Ascending aorta (tissue), 2 donors: ENCODE measurements at regions of chr1 and their contacts with region 1.

Region 1: DNA sequence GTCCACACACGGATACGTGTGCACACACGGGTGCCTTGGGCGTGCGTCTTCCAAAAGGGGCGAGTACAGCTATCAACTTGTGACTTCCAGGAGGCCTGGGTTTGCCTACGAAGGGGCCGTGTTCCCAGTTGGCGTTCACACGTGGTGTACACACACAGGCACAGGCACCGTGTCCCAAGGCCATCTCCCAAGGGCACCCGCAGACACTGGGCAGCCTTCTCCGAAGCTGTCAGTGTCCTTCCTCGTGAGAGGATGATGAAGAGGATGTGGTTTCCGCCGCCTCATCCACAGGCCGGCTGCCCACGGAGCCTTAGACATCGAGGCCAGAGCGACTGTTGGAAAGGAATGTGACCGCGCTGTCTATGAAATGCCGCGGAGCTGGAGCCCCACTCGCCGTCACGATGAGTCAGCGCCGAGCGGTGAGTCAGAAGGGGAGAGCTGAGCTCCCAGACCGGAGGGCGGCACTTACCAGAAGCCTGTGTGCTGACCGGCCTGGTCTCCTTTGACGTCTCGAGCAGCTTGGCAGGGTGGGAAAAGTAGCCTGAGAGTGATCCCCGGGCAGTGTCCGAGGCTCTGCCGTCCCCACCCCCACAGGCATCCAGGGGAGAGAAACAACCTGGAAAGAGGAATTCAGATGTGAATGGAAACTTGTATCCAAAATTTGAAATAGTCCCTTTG is 141.4 kb upstream of the ARHGEF16 start:
- DNase-seq: peak; percentile 93 to 99
- H3K4me3 ChIP-seq: peak overlapping the region; percentile 11 to 57
- H3K27ac ChIP-seq: peak overlapping the region; percentile 98 to 99
- H3K4me1 ChIP-seq: peaks cover 23 to 65% of the 10 kb centered on the region in 2 donors
- H3K27me3 ChIP-seq: no peaks in the 10 kb centered on the region
- CTCF ChIP-seq: no peak

Region 2: GRCh38 chr1:2229037-2229864 is 1083.8 kb before region 1 on chr1:
- intact Hi-C with region 1: no loop called
- DNase-seq: peak in 1 of 2 donors; percentile 82
- H3K4me3 ChIP-seq: peak overlapping the region; percentile 78 to 85
- H3K27ac ChIP-seq: peak overlapping the region; percentile 85 to 93
- H3K4me1 ChIP-seq: peaks cover 15 to 26% of the 10 kb centered on the region in 2 donors
- H3K27me3 ChIP-seq: no peaks in the 10 kb centered on the region
- CTCF ChIP-seq: peak in 1 of 3 experiments; percentile 13

Region 3: DNA sequence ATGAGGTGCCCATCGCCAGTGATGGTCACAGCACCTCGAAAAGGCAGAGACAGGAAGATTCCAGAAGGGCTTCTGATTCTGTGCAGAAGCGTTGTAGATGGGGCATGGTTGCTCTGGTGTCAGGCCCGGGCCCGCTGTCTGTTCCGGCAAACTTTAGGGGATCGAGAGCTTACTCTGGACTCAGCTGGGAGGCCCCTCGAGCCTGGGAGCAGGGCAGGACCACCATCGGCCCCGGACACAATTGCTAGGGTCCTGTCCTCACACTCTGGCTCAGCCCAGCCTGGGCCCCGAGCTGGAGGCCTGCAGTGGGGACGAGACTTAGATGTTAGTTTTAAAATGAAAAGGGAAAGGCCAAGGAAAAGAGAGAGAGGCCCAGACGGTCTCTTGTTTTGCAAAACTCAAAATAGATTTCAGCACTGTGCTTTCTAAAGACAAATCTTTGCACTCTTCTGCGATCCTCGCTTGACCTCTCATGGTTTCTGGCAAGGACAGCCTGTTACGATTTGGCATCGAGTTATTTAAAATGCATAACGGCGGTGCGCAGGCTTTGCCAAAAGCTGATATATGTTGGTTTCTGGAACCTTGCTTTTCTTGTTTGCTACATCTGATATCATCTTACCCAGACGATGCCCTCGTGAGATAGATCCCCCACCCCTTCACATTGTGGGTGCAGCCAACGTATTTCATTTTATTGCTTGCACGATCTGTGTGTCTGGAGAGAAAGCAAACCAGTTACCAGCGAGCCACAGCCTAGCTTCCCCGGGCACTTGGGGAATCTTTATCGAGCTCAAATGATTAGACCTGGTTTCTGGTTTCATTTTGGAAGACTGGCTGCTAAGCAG is 186.1 kb before region 1 on chr1:
- intact Hi-C with region 1: loop called (anchors 2 kb)
- DNase-seq: no peak
- H3K4me3 ChIP-seq: peak overlapping the region; percentile 30 to 32
- H3K27ac ChIP-seq: peak overlapping the region; percentile 86 to 91
- H3K4me1 ChIP-seq: peaks cover 49 to 96% of the 10 kb centered on the region in 2 donors
- H3K27me3 ChIP-seq: no peaks in the 10 kb centered on the region
- CTCF ChIP-seq: no peak

Region 4: GRCh38 chr1:3186513-3186921 is 126.5 kb before region 1 on chr1:
- intact Hi-C with region 1: loop called (anchors 1 kb)
- DNase-seq: peak; percentile 93 to 98
- H3K4me3 ChIP-seq: peak overlapping the region in 1 of 2 donors; percentile 41
- H3K27ac ChIP-seq: peak overlapping the region; percentile 99
- H3K4me1 ChIP-seq: peaks cover 24 to 72% of the 10 kb centered on the region in 2 donors
- H3K27me3 ChIP-seq: no peaks in the 10 kb centered on the region
- CTCF ChIP-seq: no peak

Region 5: GRCh38 chr1:3192825-3193224 is 120.2 kb before region 1 on chr1:
- intact Hi-C with region 1: loop called (anchors 1 kb)
- DNase-seq: peak; percentile 55 to 92
- H3K4me3 ChIP-seq: no peak overlapping the region
- H3K27ac ChIP-seq: peak overlapping the region; percentile 99
- H3K4me1 ChIP-seq: peaks cover 44 to 91% of the 10 kb centered on the region in 2 donors
- H3K27me3 ChIP-seq: no peaks in the 10 kb centered on the region
- CTCF ChIP-seq: no peak

Region 6: DNA sequence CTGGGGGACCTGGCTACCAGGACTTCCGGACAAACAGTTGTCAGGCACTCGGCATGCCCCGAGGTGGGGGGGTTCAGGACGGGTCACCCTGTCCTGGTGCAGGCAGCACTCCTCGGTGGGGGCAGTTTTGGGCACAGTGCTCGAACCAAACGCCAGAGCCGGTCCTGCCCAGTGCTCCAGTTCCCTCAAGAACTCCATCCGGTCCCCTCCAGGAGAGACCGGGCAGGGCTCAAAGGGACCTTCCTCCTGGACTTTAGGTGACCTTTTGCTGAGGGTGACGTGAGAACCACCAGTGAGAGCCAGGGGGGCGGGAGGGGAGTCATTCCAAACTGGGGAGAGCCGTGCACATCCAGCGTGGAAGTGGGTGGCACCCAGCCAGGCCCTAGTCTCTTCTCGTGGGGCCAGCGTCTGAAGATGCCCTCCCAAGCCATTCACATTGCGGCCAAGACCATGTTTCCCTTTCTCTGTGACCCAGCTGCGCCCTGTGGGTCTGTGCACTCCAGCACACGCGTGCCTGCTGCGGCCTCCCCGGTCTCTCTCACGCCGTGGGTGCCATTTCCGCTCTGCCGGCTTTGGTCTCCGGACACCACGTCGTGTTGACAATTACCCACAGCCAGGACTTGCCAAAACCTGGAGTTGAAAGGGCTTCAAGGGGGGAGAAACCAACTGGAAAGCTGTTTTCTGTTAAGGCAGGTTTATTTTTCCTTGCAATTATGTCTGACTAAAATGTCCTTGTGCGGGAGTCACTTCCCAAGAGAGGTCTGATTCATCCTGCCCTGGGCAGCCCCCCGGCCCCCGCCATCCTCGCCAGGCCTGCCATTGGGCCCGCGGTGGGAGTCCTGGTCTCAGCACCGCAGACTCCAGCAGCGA is 37.3 kb before region 1 on chr1:
- intact Hi-C with region 1: loop called (anchors 2 kb)
- DNase-seq: peak; percentile 39 to 86
- H3K4me3 ChIP-seq: peak overlapping the region in 1 of 2 donors; percentile 44
- H3K27ac ChIP-seq: peak overlapping the region; percentile 91 to 93
- H3K4me1 ChIP-seq: peaks cover 12 to 36% of the 10 kb centered on the region in 2 donors
- H3K27me3 ChIP-seq: no peaks in the 10 kb centered on the region
- CTCF ChIP-seq: no peak

Region 7: GRCh38 chr1:3336641-3337637 is 23.9 kb after region 1 on chr1:
- intact Hi-C with region 1: no loop called
- DNase-seq: no peak
- H3K4me3 ChIP-seq: no peak overlapping the region
- H3K27ac ChIP-seq: no peak overlapping the region
- H3K4me1 ChIP-seq: peaks cover 17 to 56% of the 10 kb centered on the region in 2 donors
- H3K27me3 ChIP-seq: no peaks in the 10 kb centered on the region
- CTCF ChIP-seq: no peak

Region 8: GRCh38 chr1:3369446-3370076 is 56.5 kb after region 1 on chr1:
- intact Hi-C with region 1: loop called (anchors 1 kb)
- DNase-seq: peak; percentile 79 to 96
- H3K4me3 ChIP-seq: peak overlapping the region in 1 of 2 donors; percentile 21
- H3K27ac ChIP-seq: peak overlapping the region; percentile 95 to 97
- H3K4me1 ChIP-seq: peaks cover 47 to 86% of the 10 kb centered on the region in 2 donors
- H3K27me3 ChIP-seq: no peaks in the 10 kb centered on the region
- CTCF ChIP-seq: no peak

Region 9: DNA sequence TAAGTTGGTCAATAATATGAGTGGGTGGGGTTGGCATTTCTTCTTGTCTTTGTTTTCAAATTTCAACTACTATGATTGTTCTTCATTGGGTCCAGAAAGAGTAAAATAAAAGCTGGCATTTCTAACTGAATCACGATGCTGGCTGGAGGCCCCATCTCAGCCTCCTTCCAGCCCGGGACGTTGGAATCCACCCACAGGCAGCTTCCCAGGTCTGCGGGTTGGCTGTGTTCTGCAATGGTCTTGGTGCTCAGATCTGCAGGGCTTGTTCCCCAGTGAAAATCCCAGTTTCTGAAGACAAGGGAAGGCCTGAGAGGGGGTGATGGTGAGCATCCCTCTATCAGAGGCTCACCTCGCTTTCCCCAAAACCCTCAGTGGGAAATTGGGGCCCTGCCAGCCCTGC is 86.7 kb after region 1 on chr1:
- intact Hi-C with region 1: loop called (anchors 5 kb)
- DNase-seq: peak in 1 of 2 donors; percentile 77
- H3K4me3 ChIP-seq: no peak overlapping the region
- H3K27ac ChIP-seq: peak overlapping the region; percentile 97 to 99
- H3K4me1 ChIP-seq: peaks cover 28 to 73% of the 10 kb centered on the region in 2 donors
- H3K27me3 ChIP-seq: no peaks in the 10 kb centered on the region
- CTCF ChIP-seq: no peak

Region 10: GRCh38 chr1:3501856-3502665 is 189.0 kb after region 1 on chr1:
- intact Hi-C with region 1: no loop called
- DNase-seq: peak in 1 of 2 donors; percentile 42
- H3K4me3 ChIP-seq: no peak overlapping the region
- H3K27ac ChIP-seq: peak overlapping the region; percentile 3 to 87
- H3K4me1 ChIP-seq: peaks cover 16 to 19% of the 10 kb centered on the region in 2 donors
- H3K27me3 ChIP-seq: no peaks in the 10 kb centered on the region
- CTCF ChIP-seq: no peak